Mammary epithelial cell (primary cell): ENCODE measurements at regions of chr6 and their contacts with region 1.

Region 1: GRCh38 chr6:70369332-70369950 is 43.9 kb upstream of the FAM135A start:
- DNase-seq: peak; percentile 71
- H3K4me3 ChIP-seq: no peak overlapping the region
- H3K27ac ChIP-seq: no peak overlapping the region
- H3K4me1 ChIP-seq: peaks cover 5% of the 10 kb centered on the region
- H3K27me3 ChIP-seq: peaks cover 31% of the 10 kb centered on the region
- CTCF ChIP-seq: peak; percentile 96

Region 2: GRCh38 chr6:70221025-70221714 is 148.3 kb before region 1 on chr6:
- CTCF ChIA-PET with region 1: interaction called, 4 read pairs
- dilution Hi-C with region 1: no loop called
- in situ Hi-C with region 1: no loop called
- intact Hi-C with region 1: loop called (anchors 1 kb)
- DNase-seq: no peak
- H3K4me3 ChIP-seq: no peak overlapping the region
- H3K27ac ChIP-seq: no peak overlapping the region
- H3K4me1 ChIP-seq: no peaks in the 10 kb centered on the region
- H3K27me3 ChIP-seq: peaks cover 17% of the 10 kb centered on the region
- CTCF ChIP-seq: peak; percentile 57 to 64

Region 3: GRCh38 chr6:70310063-70310694 is 59.3 kb before region 1 on chr6:
- CTCF ChIA-PET with region 1: interaction called, 23 read pairs
- dilution Hi-C with region 1: no loop called
- in situ Hi-C with region 1: loop called (anchors 5 to 10 kb)
- intact Hi-C with region 1: loop called (anchors 1 kb)
- DNase-seq: peak; percentile 48
- H3K4me3 ChIP-seq: no peak overlapping the region
- H3K27ac ChIP-seq: no peak overlapping the region
- H3K4me1 ChIP-seq: no peaks in the 10 kb centered on the region
- H3K27me3 ChIP-seq: peaks cover 59% of the 10 kb centered on the region
- CTCF ChIP-seq: peak; percentile 60 to 66

Region 4: DNA sequence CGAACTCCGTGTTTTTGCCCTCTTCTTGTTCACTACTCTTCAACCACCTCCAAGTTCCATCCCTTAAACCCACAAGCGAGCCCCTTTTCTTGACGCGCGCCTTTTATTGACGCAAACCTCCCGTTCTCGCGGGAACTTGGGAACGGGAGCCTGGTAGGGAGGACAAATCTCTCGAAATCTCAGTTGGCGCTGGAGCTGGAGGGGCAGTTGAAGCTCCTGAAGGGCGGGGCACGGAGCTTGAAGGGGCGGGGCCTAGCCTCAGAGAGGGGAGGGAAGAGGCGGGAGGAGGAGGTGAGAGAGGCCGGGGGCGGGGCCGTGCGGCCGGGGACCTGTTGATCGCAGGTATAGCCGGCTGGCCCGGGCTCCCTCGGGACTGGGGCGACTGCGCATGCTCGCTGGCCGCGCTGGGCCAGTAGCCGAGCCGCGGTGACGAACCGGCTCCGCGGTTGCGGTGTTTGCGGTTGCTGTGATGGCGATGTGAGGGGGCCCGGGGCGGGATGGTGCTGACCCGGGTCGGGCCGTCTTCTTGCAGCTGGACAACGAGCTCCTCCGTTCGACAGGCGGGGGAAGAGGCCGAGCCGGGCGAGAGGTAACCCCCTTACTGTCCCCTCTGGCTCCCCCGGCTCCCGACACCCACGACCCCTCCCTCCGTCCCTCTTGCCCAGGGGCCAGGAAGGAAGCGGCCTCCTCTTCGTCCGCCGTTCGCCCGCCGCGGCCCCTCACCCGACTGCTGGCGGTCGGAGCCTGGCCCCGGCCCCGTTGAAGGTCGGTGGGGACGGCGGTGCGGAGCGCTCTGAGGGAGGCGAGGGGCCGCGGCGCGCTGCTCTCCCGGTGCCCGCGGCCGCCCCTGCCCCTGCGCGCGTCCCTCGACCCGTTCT is 43.9 kb after region 1 on chr6 and contains the start of gene FAM135A:
- CTCF ChIA-PET with region 1: interaction called, 5 read pairs
- dilution Hi-C with region 1: no loop called
- in situ Hi-C with region 1: no loop called
- intact Hi-C with region 1: loop called (anchors 1 kb)
- DNase-seq: peak; percentile 99
- H3K4me3 ChIP-seq: peak within 1 kb of the TSS; percentile 77 to 94 (median 79)
- H3K27ac ChIP-seq: peak within 1 kb of the TSS; percentile 83
- H3K4me1 ChIP-seq: peaks cover 7% of the 10 kb centered on the region
- H3K27me3 ChIP-seq: no peaks in the 10 kb centered on the region
- CTCF ChIP-seq: no peak
- total RNA-seq, gene FAM135A: 21.2 to 30.0 TPM

Region 5: DNA sequence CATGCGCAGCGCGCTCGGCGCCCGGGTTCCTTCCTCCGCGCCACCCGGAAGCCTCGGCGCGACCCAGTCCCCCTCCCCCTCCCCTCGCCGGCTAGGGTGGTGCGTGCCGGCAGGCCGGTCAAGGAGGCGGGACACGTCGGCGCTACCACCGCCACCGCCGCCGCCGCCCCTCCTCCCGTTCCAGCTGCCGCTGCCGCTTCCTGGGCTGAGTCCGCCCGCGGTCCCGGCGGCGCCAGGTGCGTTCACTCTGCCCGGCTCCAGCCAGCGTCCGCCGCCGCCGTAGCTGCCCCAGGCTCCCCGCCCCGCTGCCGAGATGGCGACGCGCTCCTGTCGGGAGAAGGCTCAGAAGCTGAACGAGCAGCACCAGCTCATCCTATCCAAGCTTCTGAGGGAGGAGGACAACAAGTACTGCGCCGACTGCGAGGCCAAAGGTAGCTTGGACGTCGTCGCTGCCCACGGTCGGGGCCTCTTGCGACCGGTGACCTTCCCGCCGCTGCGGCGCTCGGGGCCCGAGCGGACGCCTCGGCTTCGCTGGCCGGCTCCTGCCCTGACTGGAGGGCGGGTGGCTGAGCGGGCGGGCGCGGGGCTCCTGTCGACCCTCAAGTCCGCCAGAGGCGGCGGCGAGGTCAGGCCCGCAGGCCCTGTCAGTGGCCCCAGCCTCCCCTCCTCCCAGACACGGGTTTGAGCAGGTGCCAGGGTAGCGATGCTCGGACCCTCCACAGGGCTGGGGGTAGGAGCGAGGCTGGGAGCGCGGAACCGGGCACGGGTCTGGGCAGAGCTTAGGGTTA is 298.5 kb after region 1 on chr6 and contains the start of gene SMAP1:
- CTCF ChIA-PET with region 1: interaction called, 3 read pairs
- dilution Hi-C with region 1: no loop called
- in situ Hi-C with region 1: no loop called
- intact Hi-C with region 1: loop called (anchors 5 kb)
- DNase-seq: peak; percentile 90
- H3K4me3 ChIP-seq: peak within 1 kb of the TSS; percentile 77 to 97 (median 92)
- H3K27ac ChIP-seq: peak within 1 kb of the TSS; percentile 45
- H3K4me1 ChIP-seq: peaks cover 13% of the 10 kb centered on the region
- H3K27me3 ChIP-seq: no peaks in the 10 kb centered on the region
- CTCF ChIP-seq: no peak
- total RNA-seq, gene SMAP1: 20.2 to 22.1 TPM

Region 6: DNA sequence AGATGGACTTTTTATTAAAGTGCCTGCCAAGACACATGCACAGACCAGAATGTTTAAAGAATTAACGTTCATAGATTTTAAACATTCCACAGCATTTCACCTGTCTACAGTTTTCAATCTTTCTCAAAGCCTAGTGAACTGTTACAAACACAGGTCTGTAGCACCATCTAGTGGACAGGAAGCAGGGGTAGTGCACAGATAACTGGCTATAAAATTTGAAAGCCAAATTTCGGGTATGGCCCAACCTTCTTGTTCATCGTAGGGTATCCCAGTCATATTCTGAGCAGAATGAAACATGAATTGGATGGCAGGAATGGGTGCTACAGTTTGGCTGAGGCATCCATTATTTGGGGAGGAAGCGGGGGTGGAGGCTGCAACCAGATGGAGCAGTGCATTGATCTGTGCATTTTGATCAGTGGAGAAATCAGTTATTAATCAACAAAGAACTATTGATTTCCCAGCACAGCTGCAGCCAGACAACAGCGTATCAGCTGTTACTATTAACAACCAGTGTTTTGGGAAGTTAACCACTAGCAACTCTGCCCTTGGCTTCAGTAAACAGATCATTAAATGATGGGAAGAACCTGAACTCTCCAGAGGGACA is 643.5 kb after region 1 on chr6:
- CTCF ChIA-PET with region 1: no interaction called
- dilution Hi-C with region 1: no loop called
- in situ Hi-C with region 1: no loop called
- intact Hi-C with region 1: loop called (anchors 5 kb)
- DNase-seq: peak; percentile 50
- H3K4me3 ChIP-seq: no peak overlapping the region
- H3K27ac ChIP-seq: no peak overlapping the region
- H3K4me1 ChIP-seq: no peaks in the 10 kb centered on the region
- H3K27me3 ChIP-seq: peaks cover 4% of the 10 kb centered on the region
- CTCF ChIP-seq: peak; percentile 86